ENCODE measurements at regions of chr6 and their contacts with region 1.

Region 1: GRCh38 chr6:134216301-134217010 is 101.5 kb downstream of the SGK1 start:
- DNase-seq: peak; percentile 68
- ATAC-seq: peak; percentile 73
- H3K4me3 ChIP-seq: peak overlapping the region in 1 of 5 experiments; percentile 18
- H3K4me3 Mint-ChIP-seq: peak overlapping the region; percentile 37
- H3K27ac ChIP-seq: peak overlapping the region; percentile 81 to 82
- H3K27ac Mint-ChIP-seq: peak overlapping the region; percentile 77
- H3K4me1 ChIP-seq: peaks cover 21 to 31% of the 10 kb centered on the region in 2 donors
- H3K4me1 Mint-ChIP-seq: peaks cover 25% of the 10 kb centered on the region
- H3K27me3 ChIP-seq: no peaks in the 10 kb centered on the region
- H3K27me3 Mint-ChIP-seq: no peaks in the 10 kb centered on the region
- CTCF ChIP-seq: no peak

Region 2: GRCh38 chr6:133973109-133973971 is 243.1 kb before region 1 on chr6:
- CTCF ChIA-PET with region 1: no interaction called
- POLR2A ChIA-PET with region 1: no interaction called
- intact Hi-C with region 1: no loop called
- DNase-seq: peak; percentile 63
- ATAC-seq: peak; percentile 43
- H3K4me3 ChIP-seq: no peak overlapping the region
- H3K4me3 Mint-ChIP-seq: no peak overlapping the region
- H3K27ac ChIP-seq: no peak overlapping the region
- H3K27ac Mint-ChIP-seq: no peak overlapping the region
- H3K4me1 ChIP-seq: no peaks in the 10 kb centered on the region
- H3K4me1 Mint-ChIP-seq: peaks cover 27% of the 10 kb centered on the region
- H3K27me3 ChIP-seq: no peaks in the 10 kb centered on the region
- H3K27me3 Mint-ChIP-seq: no peaks in the 10 kb centered on the region
- CTCF ChIP-seq: peak; percentile 86

Region 3: DNA sequence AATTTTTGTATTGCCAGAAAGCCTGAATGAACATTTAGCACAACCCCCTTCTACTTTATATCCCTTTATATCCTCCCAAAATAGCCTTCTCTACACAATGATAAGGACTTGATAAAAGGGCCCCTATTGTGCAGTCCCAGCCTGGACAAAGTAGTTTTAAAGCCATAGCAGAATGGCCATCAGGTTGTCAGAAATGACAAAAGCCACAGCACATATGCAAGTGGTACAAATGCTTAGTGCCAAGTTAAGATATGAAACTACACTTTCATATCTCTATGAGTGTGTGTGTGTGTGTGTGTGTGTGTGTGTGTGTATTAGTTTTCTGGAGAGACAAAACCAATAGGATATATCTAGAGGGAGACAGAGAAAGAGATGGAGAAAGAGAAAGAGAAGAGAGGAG is 31.2 kb before region 1 on chr6:
- CTCF ChIA-PET with region 1: no interaction called
- POLR2A ChIA-PET with region 1: no interaction called
- intact Hi-C with region 1: no loop called
- DNase-seq: no peak
- ATAC-seq: no peak
- H3K4me3 ChIP-seq: no peak overlapping the region
- H3K4me3 Mint-ChIP-seq: no peak overlapping the region
- H3K27ac ChIP-seq: no peak overlapping the region
- H3K27ac Mint-ChIP-seq: no peak overlapping the region
- H3K4me1 ChIP-seq: peaks cover 4 to 8% of the 10 kb centered on the region in 2 donors
- H3K4me1 Mint-ChIP-seq: peaks cover 3% of the 10 kb centered on the region
- H3K27me3 ChIP-seq: no peaks in the 10 kb centered on the region
- H3K27me3 Mint-ChIP-seq: no peaks in the 10 kb centered on the region
- CTCF ChIP-seq: no peak

Region 4: GRCh38 chr6:134230087-134230700 is 13.7 kb after region 1 on chr6:
- CTCF ChIA-PET with region 1: interaction called, 3 read pairs
- POLR2A ChIA-PET with region 1: no interaction called
- intact Hi-C with region 1: loop called (anchors 2 kb)
- DNase-seq: peak; percentile 57
- ATAC-seq: peak; percentile 39
- H3K4me3 ChIP-seq: peak overlapping the region in 2 of 5 experiments; percentile 34 to 44
- H3K4me3 Mint-ChIP-seq: peak overlapping the region; percentile 52
- H3K27ac ChIP-seq: peak overlapping the region; percentile 45 to 51
- H3K27ac Mint-ChIP-seq: peak overlapping the region; percentile 63
- H3K4me1 ChIP-seq: peaks cover 20% of the 10 kb centered on the region in 2 donors
- H3K4me1 Mint-ChIP-seq: peaks cover 23% of the 10 kb centered on the region
- H3K27me3 ChIP-seq: no peaks in the 10 kb centered on the region
- H3K27me3 Mint-ChIP-seq: no peaks in the 10 kb centered on the region
- CTCF ChIP-seq: no peak

Region 5: DNA sequence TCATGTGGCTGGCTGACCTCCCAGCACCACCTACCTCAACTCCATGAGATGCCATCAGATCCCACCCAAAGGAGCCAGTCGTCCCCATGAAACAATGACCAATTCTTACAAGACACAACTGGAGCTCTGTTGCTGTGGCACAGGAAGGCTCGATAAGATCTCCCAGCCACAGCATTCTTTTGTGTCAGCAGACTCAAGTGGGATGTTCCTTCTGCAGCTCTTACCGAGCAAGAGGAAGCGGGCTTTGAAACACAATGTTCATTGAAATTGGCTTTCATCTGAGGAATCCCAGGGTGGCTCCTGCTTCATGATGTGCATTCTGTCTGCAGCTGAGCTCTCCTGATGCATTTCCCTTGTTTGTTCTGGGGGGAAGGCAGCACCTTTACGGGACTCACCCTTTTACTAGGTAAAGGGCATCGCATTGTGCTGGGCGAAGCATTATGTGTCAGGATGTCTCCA is 323.4 kb after region 1 on chr6:
- CTCF ChIA-PET with region 1: no interaction called
- POLR2A ChIA-PET with region 1: no interaction called
- intact Hi-C with region 1: no loop called
- DNase-seq: no peak
- ATAC-seq: no peak
- H3K4me3 ChIP-seq: no peak overlapping the region
- H3K4me3 Mint-ChIP-seq: no peak overlapping the region
- H3K27ac ChIP-seq: no peak overlapping the region
- H3K27ac Mint-ChIP-seq: no peak overlapping the region
- H3K4me1 ChIP-seq: no peaks in the 10 kb centered on the region
- H3K4me1 Mint-ChIP-seq: no peaks in the 10 kb centered on the region
- H3K27me3 ChIP-seq: no peaks in the 10 kb centered on the region
- H3K27me3 Mint-ChIP-seq: peaks cover 3% of the 10 kb centered on the region
- CTCF ChIP-seq: no peak

Measured in B cell (primary cell).